ENCODE measurements at regions of chr5 and their contacts with region 1.

Region 1: DNA sequence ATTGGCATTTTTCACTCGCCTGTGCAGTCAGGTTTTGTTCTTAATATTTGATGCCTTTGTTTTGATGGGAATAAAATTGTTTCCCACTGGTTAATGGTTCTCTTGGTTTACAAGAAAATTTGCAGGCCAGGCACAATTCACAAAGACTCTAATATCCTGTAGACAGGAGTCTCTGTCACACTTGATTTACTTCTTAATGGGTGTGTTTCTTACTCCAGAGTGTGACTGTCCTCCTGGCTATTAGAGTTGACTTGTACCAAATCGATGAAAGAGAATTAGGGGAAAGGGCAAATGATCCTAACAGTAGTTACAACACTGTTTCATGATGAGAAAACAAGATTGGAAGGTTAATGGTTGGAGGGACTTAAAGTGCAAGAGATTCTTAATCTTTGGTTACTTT is 142.8 kb upstream of the SV2C start:
- DNase-seq: no peak
- ATAC-seq: no peak
- H3K4me3 ChIP-seq: no peak overlapping the region
- H3K27ac ChIP-seq: no peak overlapping the region
- H3K4me1 ChIP-seq: no peaks in the 10 kb centered on the region
- H3K27me3 ChIP-seq: no peaks in the 10 kb centered on the region
- CTCF ChIP-seq: no peak

Region 2: DNA sequence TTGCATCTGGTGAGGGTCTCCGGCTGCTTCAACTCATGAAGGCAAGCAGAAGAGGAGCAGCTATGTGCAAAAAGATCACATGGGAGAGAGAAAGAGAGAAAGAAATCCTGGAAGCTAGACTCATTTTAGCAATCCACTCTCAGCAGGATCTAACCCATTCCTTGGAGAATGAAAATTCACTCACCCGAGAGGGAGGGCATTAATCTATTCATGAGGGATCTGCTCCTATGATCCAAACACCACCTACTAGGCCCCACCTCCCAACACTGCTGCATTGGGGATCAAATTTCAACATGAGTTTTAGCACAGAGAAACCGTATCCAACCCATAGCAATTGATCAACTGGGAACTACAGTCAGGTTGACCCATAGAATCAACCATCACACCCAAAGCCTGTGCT is 44.7 kb after region 1 on chr5:
- intact Hi-C with region 1: no loop called
- DNase-seq: no peak
- ATAC-seq: no peak
- H3K4me3 ChIP-seq: no peak overlapping the region
- H3K27ac ChIP-seq: no peak overlapping the region
- H3K4me1 ChIP-seq: no peaks in the 10 kb centered on the region
- H3K27me3 ChIP-seq: no peaks in the 10 kb centered on the region
- CTCF ChIP-seq: no peak

Region 3: DNA sequence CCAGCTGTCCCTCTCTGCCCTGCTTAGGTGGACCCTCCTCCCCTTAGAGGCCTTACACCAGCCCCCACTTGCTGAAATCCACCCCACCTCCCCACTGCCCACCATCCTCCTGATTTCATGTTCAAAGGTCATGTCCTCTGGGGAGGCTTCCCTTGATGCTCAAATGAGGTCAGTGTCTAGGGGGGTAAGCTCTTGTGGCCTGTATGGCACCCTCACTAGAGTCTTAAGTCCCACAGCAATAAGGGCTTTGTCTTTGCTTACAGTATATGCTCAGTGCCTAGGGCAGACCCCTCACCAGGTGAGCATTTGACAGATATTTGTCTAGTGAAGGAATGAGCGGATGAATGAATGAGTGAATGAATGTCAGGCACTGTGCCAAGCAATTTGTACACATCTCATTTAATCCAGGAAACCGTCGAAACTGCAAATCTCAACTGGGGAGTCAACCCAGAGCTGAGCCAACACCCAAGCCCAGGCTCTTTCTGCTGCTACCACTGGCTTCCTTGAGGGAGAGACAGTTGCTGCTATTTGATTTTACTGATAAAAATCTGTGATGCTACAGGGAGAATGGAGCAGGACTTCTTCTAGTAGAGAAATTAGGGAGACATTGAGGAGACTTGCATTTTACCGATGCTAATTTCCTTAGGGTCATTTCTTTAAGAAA is 564.6 kb after region 1 on chr5:
- intact Hi-C with region 1: loop called in 1 of 2 experiments (anchors 5 kb)
- DNase-seq: no peak
- ATAC-seq: no peak
- H3K4me3 ChIP-seq: no peak overlapping the region
- H3K27ac ChIP-seq: no peak overlapping the region
- H3K4me1 ChIP-seq: no peaks in the 10 kb centered on the region
- H3K27me3 ChIP-seq: no peaks in the 10 kb centered on the region
- CTCF ChIP-seq: no peak

Measured in psoas muscle (tissue), 8 donors.